ENCODE measurements at regions of chr14 and their contacts with region 1.

Region 1: GRCh38 chr14:77654001-77654441 is 37.6 kb upstream of the SPTLC2 start:
- DNase-seq: no peak
- H3K4me3 ChIP-seq: no peak overlapping the region
- CTCF ChIP-seq: no peak

Region 2: DNA sequence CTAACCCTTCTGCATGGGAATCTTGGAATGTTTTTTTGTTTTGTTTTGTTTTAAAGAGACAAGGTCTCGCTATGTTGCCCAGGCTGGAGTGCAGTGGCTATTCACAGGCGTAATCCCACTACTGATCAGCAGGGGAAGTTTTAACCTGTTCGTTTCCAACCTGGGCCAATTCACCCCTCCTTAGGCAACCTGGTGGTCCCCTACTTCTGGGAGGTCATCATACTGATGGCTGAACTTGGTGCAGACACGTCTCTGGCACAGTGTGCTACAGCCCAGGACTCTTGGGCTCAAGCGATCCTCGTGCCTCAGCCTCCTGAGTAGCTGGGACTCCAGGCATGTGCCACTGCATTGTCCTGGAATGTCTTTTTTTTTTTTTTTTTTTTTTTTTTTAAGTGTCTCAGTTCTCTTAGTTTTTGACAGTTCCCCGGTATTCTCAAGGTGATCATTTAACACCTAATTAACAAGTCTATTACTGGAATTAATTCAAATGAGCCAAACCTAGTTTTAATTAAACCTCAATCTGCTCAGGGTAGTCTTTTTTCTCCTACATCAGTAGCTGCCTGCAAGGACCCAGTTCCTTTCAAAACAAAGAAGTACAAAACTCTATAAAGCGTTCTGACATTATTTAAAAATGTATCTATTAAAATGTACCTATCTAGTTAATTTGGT is 106.4 kb before region 1 on chr14:
- CTCF ChIA-PET with region 1: no interaction called
- POLR2A ChIA-PET with region 1: no interaction called
- DNase-seq: no peak
- H3K4me3 ChIP-seq: no peak overlapping the region
- CTCF ChIP-seq: no peak

Region 3: DNA sequence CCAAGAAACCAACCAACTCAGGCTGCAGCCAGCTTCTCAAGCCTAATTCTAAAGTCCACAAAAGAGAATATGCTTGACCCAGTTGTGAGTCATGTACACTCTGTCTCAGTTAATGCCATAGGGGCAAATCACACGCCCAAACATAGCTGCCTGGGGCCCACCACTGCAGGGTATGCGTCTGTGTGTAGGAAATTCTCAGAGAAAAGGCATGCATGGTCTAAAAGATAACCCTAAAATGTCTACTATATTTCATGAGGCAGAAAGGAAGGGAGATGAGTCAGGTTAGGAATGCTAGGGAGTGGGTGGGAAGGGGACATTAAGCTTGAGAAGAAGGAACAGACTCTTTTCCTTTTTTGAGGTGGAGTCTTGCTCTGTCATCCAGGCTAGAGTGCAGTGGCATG is 15.2 kb before region 1 on chr14:
- CTCF ChIA-PET with region 1: interaction called, 13 read pairs
- POLR2A ChIA-PET with region 1: interaction called, 3 read pairs
- DNase-seq: peak; percentile 96
- H3K4me3 ChIP-seq: no peak overlapping the region
- CTCF ChIP-seq: no peak

Region 4: DNA sequence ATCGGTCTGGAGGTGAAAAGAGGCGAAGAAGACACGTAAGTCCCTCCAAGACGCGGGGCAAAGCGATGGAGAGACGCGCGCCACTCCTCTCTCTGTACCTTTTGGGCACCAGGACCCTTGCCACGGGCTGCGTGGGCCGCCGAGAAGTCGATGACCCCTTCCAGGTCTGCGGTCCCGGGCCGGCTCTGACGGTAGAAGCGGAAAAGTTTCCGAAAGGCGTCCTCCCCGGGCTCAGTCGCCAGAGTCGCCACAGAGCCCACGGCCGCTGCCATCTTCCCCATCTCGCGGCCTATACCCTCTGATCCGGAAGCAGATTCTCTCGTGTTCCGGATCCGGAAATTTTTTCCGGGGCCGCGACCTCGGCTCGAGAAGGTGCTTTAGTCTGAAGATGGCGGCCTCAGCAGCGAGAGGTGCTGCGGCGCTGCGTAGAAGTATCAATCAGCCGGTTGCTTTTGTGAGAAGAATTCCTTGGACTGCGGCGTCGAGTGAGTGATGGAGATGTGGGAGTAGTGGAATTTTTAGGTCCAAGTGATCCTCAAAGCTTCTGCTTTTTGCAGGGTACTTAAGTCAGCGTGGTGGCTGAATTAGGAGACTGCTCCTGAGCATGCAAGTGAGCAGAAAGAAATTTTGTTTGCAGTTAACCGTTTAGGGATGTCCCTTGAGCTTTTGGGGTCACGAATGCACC is 53.8 kb after region 1 on chr14 and contains the starts of genes ALKBH1 and SLIRP:
- CTCF ChIA-PET with region 1: interaction called, 25 read pairs
- POLR2A ChIA-PET with region 1: no interaction called
- DNase-seq: peak; percentile 2
- H3K4me3 ChIP-seq: peak within 1 kb of the TSS; percentile 98
- CTCF ChIP-seq: no peak

Measured in AG04449 (cell line).